ENCODE measurements at regions of chr7 and their contacts with region 1.

Region 1: DNA sequence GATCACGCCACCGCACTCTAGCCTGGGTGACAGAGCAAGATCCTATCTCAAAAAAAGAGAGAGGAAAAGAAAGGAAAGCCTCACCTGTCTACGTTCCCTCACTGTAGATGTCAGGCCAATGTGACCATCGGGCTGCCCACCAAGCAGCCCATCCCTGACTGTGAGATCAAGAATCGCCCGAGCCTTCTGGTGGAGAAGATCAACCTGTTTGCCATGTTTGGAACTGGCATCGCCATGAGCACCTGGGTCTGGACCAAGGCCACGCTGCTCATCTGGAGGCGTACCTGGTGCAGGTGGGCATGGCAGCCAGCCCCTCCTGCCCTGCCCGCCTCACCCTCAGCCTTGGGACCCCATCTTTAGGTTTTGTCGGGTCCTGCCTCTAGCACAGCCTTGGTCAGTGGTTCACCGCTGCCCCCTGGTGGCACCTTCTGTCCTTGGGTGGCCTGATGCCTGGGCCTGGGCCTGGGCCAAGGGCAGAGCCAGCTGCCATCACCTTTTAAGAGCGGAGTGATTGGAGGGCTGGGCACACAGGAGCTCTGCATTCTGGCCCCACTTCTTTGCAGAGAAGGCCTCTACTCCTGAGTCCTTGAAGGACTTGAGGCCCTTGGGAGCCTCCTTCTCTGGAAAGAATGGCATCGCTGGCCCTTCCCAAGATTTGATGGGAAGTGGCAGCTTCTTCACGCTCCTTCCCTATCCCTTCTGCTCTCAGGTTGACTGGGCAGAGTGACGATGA is 14.4 kb upstream of the AHCYL2 start:
- DNase-seq: peak; percentile 75 to 89 (median 84)
- ATAC-seq: peak; percentile 72 to 93 (median 91)
- H3K4me3 ChIP-seq: no peak overlapping the region
- H3K27ac ChIP-seq: no peak overlapping the region
- H3K4me1 ChIP-seq: peaks cover 0 to 4% (median 0%) of the 10 kb centered on the region in 12 donors
- H3K27me3 ChIP-seq: no peaks in the 10 kb centered on the region
- CTCF ChIP-seq: peak; percentile 71 to 89 (median 84)
- POLR2A ChIP-seq: no peak

Region 2: DNA sequence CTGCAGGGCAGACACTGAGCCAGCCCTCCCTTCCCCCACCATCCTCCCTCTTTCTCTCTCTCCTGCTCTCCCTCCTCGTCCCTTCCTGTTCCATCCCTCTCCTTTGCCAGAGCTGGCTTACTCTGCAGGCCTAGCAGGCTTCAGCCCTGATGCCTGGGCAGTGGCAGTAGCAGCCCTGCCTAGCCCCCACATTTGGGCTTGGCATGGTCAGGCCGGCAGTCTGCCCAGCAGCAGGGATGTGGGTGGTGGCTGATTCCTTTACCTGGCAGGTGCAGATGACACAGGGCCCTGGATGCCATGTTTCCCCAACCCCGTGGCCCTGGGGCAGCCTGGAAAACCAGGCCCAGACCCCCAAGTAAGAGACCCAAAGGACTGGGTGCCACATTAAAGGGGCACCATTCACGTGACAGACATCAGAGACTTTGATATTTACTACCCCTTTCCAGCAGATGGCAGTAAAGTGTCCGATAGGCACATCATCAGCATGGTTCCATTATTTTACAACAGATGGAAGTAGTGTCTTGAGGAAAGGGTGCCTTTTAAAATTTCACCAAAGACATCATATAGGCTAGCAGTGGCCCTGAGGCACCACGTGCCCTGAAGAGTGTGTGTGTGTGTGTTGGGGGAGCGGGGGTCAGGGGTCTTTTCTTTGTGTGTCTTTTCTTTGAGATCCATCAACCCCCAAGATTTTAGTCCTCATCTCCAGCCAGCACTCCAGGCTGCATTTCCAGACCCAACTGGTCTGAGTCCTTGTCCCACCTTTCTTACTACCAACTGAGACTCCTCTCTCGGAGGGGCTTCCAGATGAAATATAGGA is 305.8 kb before region 1 on chr7:
- intact Hi-C with region 1: loop called in 1 of 10 experiments (anchors 5 kb)
- DNase-seq: peak in 1 of 5 donors; percentile 14
- ATAC-seq: peak in 3 of 4 donors; percentile 16 to 54 (median 44)
- H3K4me3 ChIP-seq: no peak overlapping the region
- H3K27ac ChIP-seq: no peak overlapping the region
- H3K4me1 ChIP-seq: peaks cover 0 to 6% (median 0%) of the 10 kb centered on the region in 12 donors
- H3K27me3 ChIP-seq: peaks cover 0 to 37% (median 11%) of the 10 kb centered on the region in 9 donors
- CTCF ChIP-seq: peak; percentile 34 to 65 (median 50)
- POLR2A ChIP-seq: no peak

Region 3: DNA sequence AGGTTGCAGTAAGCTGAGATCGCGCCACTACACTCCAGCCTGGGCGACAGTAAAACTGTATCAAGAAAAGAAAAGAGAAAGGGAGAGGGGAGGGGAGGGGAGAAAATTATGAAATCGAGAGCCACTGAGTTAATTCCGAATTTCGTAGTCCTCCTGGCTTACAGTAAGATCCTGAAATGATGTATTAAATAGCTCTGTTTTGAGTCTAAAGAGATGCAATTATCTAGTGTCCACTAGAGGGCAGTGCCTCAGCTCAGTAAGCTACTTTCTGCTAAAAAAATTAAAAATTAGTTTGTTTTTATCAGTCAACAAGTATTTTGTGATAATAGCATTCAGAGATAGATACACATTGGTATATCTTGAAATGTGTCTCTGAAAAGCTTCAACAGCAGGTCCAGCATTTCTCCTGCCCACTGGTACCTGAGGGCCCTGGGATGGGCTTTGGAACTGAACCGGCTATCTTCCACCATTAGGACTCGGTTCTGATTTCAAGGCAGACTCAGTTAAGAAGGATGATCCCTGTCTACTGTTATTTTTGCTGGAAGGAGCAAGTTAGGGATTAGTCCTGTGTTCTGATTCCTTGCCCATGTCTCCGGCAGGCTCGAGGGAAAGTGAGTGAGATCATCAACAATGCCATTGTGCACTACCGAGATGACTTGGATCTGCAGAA is 46.4 kb before region 1 on chr7:
- intact Hi-C with region 1: loop called (anchors 1 to 5 kb)
- DNase-seq: no peak
- ATAC-seq: peak in 1 of 4 donors; percentile 14
- H3K4me3 ChIP-seq: no peak overlapping the region
- H3K27ac ChIP-seq: no peak overlapping the region
- H3K4me1 ChIP-seq: peaks cover 0 to 10% (median 1%) of the 10 kb centered on the region in 12 donors
- H3K27me3 ChIP-seq: no peaks in the 10 kb centered on the region
- CTCF ChIP-seq: peak; percentile 71 to 94 (median 82)
- POLR2A ChIP-seq: no peak

Region 4: GRCh38 chr7:129169171-129169671 is 41.2 kb before region 1 on chr7:
- intact Hi-C with region 1: loop called in 7 of 10 experiments (anchors 1 to 5 kb)
- DNase-seq: peak; percentile 59 to 82 (median 65)
- ATAC-seq: peak; percentile 35 to 90 (median 84)
- H3K4me3 ChIP-seq: peak overlapping the region; percentile 1 to 67 (median 53)
- H3K27ac ChIP-seq: peak overlapping the region in 6 of 12 donors; percentile 13 to 64 (median 34)
- H3K4me1 ChIP-seq: peaks cover 0 to 17% (median 4%) of the 10 kb centered on the region in 12 donors
- H3K27me3 ChIP-seq: no peaks in the 10 kb centered on the region
- CTCF ChIP-seq: no peak
- POLR2A ChIP-seq: no peak